HepG2 (cell line): ENCODE measurements at regions of chr4 and their contacts with region 1.

Region 1: GRCh38 chr4:33386761-33387160 is 2666.6 kb downstream of the PCDH7 start:
- DNase-seq: no peak
- ATAC-seq: no peak
- H3K4me3 ChIP-seq: no peak overlapping the region
- H3K27ac ChIP-seq: no peak overlapping the region
- H3K4me1 ChIP-seq: no peaks in the 10 kb centered on the region
- H3K27me3 ChIP-seq: no peaks in the 10 kb centered on the region
- CTCF ChIP-seq: no peak
- EP300 ChIP-seq: no peak
- POLR2A ChIP-seq: no peak
- RAD21 ChIP-seq: no peak

Region 2: GRCh38 chr4:34720571-34720970 is 1333.8 kb after region 1 on chr4:
- CTCF ChIA-PET with region 1: no interaction called
- POLR2A ChIA-PET with region 1: no interaction called
- in situ Hi-C with region 1: no loop called
- intact Hi-C with region 1: loop called (anchors 10 kb)
- DNase-seq: peak; percentile 17
- ATAC-seq: no peak
- H3K4me3 ChIP-seq: no peak overlapping the region
- H3K27ac ChIP-seq: no peak overlapping the region
- H3K4me1 ChIP-seq: no peaks in the 10 kb centered on the region
- H3K27me3 ChIP-seq: no peaks in the 10 kb centered on the region
- CTCF ChIP-seq: peak; percentile 40
- EP300 ChIP-seq: no peak
- POLR2A ChIP-seq: no peak
- RAD21 ChIP-seq: no peak